ENCODE measurements at regions of chr1 and their contacts with region 1.

Region 1: GRCh38 chr1:45913183-45913683 is 109.8 kb downstream of the MAST2 start:
- DNase-seq: peak; percentile 67
- H3K4me3 ChIP-seq: peak overlapping the region; percentile 11; the same call in 1 of the 2 replicates
- H3K27ac ChIP-seq: peak overlapping the region; percentile 77
- H3K27me3 ChIP-seq: no peaks in the 10 kb centered on the region
- CTCF ChIP-seq: no peak

Region 2: DNA sequence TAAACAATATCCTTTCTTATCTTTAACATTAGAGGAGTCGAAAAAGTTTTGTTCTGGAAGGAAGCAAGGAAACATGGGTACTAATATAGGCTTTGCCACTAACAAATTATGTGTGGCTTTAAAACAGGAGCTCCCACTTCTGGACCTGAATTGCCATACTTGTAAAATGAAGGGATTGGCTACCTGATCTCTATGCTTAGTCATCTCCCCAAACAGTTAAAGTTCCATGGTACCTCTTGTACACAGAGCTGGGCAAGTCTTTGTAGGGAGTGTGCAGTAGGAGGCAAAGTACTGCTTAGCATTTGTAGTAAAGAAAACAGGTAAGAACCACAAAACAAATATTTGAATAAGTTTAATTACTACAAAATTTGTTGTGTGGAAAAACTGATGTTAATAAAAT is 28.5 kb before region 1 on chr1:
- CTCF ChIA-PET with region 1: interaction called, 12 read pairs
- POLR2A ChIA-PET with region 1: no interaction called
- DNase-seq: no peak
- H3K4me3 ChIP-seq: no peak overlapping the region
- H3K27ac ChIP-seq: no peak overlapping the region
- H3K27me3 ChIP-seq: no peaks in the 10 kb centered on the region
- CTCF ChIP-seq: no peak

Region 3: DNA sequence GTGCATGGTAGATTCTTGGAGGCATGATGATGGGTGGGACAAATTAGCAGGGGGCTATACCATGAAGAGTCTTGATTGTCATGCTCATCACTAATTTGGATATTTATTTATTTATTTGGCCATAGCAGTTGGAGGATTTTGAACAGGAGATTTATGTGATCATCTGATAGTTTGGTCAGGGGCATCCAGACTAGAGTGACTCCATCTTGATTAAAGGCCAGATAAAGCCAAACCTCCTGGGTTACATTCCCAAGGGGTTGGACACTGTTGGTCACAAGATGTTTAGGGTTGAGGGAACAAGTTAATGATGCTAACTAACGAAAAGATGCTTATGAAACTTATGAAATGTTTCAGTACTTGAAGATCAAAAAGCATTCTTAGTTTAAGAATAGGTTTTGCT is 30.0 kb after region 1 on chr1:
- CTCF ChIA-PET with region 1: no interaction called
- POLR2A ChIA-PET with region 1: no interaction called
- DNase-seq: no peak
- H3K4me3 ChIP-seq: no peak overlapping the region
- H3K27ac ChIP-seq: no peak overlapping the region
- H3K27me3 ChIP-seq: no peaks in the 10 kb centered on the region
- CTCF ChIP-seq: no peak